ENCODE measurements at regions of chr2 and their contacts with region 1.

Region 1: GRCh38 chr2:120252225-120253021 is at the start of gene RALB:
- DNase-seq: peak; percentile 98
- ATAC-seq: peak; percentile 91
- H3K4me3 ChIP-seq: peak within 1 kb of the TSS; percentile 70 to 87 (median 73)
- H3K27ac ChIP-seq: peak within 1 kb of the TSS; percentile 47
- H3K4me1 ChIP-seq: peaks cover 46% of the 10 kb centered on the region
- H3K27me3 ChIP-seq: peaks cover 8 to 32% of the 10 kb centered on the region in 2 experiments; a peak in 3 of 5 replicates
- CTCF ChIP-seq: no peak
- EP300 ChIP-seq: no peak
- POLR2A ChIP-seq: peak in 1 of 2 experiments; percentile 51; a peak in 3 of 4 replicates
- RAD21 ChIP-seq: no peak
- total RNA-seq, gene RALB: 43.2 and 65.4 TPM in 2 replicates

Region 2: DNA sequence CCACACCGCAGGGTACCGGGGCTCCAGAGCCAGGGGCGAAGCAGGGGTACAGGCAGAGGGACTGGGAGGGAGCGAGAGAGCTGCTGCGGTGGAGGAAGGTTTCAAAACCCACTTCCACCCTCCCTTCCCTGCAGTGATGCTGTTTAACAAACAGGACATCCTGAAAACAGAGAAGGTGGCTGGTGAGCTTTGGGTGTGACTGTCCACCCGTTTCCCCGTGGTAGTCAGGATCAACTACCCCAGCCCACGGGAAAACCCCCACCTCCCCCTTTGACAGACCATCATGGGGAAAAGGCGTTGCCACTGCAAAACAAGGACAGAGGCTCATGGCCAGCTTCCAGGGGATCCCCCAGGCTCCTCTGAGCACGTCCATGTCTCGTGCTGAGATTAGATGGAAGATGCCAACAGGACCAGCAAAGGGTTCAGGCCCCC is 42.1 kb before region 1 on chr2:
- CTCF ChIA-PET with region 1: no interaction called
- POLR2A ChIA-PET with region 1: no interaction called
- in situ Hi-C with region 1: no loop called
- intact Hi-C with region 1: no loop called
- DNase-seq: no peak
- ATAC-seq: no peak
- H3K4me3 ChIP-seq: no peak overlapping the region; a peak in 1 of 6 replicates
- H3K27ac ChIP-seq: no peak overlapping the region
- H3K4me1 ChIP-seq: peaks cover 6% of the 10 kb centered on the region; the same call in 1 of the 2 replicates
- H3K27me3 ChIP-seq: peaks cover 2 to 13% of the 10 kb centered on the region in 2 experiments; a peak in 3 of 5 replicates
- CTCF ChIP-seq: no peak
- EP300 ChIP-seq: no peak
- POLR2A ChIP-seq: no peak
- RAD21 ChIP-seq: no peak

Region 3: GRCh38 chr2:120223034-120223912 is 29.1 kb before region 1 on chr2 and contains the start of gene TMEM185B:
- CTCF ChIA-PET with region 1: no interaction called
- POLR2A ChIA-PET with region 1: interaction called, 11 read pairs
- in situ Hi-C with region 1: no loop called
- intact Hi-C with region 1: no loop called
- DNase-seq: peak; percentile 59
- ATAC-seq: peak; percentile 81
- H3K4me3 ChIP-seq: peak within 1 kb of the TSS; percentile 61 to 81 (median 70)
- H3K27ac ChIP-seq: peak within 1 kb of the TSS; percentile 14
- H3K4me1 ChIP-seq: peaks cover 62% of the 10 kb centered on the region
- H3K27me3 ChIP-seq: peaks cover 14 to 38% of the 10 kb centered on the region in 2 experiments; a peak in 4 of 5 replicates
- CTCF ChIP-seq: peak; percentile 71
- EP300 ChIP-seq: no peak
- POLR2A ChIP-seq: peak; percentile 61 to 69; a peak in 3 of 4 replicates
- RAD21 ChIP-seq: peak; percentile 74
- total RNA-seq, gene TMEM185B: 3.5 and 7.0 TPM in 2 replicates

Region 4: DNA sequence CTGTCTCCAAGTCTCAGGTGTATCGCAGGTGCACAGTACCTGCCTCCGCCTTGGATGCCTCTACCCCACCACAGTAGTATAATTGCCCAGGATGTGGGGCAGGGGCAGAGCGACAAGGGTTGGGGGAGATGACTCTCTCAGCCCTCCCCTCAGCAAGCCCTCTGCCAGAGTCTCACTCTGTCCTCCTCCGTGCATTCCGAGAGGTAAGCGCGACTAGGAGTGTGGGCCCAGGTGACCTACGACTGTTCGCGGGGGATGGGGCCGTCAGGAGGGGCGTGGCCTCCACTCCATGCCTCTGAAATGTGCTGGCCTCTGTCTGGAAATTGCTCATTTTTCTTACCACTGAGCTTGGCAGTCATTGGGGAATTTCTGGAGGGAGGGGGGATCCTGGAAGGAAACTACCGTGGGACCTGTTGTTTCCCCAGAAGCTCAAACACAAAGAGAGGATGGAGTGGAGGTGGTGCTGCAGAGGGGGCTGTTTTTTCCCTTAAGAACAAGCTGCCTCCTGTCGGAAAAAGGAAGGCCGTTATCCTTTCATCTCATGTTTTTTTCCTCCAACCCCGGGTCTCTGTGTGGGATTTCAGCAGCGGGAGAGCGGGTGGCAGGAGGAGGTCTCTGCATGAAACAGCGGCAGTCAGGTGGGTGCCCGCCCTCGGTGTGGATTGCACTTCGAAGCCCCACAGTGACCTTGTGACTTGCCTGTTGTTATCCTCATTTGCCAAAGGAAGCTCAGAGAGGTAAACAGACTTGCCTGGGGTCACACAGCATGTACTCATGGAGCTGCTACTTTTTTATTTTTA is 12.7 kb before region 1 on chr2:
- CTCF ChIA-PET with region 1: no interaction called
- POLR2A ChIA-PET with region 1: interaction called, 22 read pairs
- in situ Hi-C with region 1: no loop called
- intact Hi-C with region 1: no loop called
- DNase-seq: peak; percentile 37
- ATAC-seq: peak; percentile 48
- H3K4me3 ChIP-seq: peak overlapping the region; percentile 29 to 68 (median 48)
- H3K27ac ChIP-seq: peak overlapping the region; percentile 4
- H3K4me1 ChIP-seq: peaks cover 48% of the 10 kb centered on the region
- H3K27me3 ChIP-seq: peaks cover 4 to 10% of the 10 kb centered on the region in 2 experiments; a peak in 4 of 5 replicates
- CTCF ChIP-seq: no peak
- EP300 ChIP-seq: no peak
- POLR2A ChIP-seq: no peak
- RAD21 ChIP-seq: no peak

Region 5: DNA sequence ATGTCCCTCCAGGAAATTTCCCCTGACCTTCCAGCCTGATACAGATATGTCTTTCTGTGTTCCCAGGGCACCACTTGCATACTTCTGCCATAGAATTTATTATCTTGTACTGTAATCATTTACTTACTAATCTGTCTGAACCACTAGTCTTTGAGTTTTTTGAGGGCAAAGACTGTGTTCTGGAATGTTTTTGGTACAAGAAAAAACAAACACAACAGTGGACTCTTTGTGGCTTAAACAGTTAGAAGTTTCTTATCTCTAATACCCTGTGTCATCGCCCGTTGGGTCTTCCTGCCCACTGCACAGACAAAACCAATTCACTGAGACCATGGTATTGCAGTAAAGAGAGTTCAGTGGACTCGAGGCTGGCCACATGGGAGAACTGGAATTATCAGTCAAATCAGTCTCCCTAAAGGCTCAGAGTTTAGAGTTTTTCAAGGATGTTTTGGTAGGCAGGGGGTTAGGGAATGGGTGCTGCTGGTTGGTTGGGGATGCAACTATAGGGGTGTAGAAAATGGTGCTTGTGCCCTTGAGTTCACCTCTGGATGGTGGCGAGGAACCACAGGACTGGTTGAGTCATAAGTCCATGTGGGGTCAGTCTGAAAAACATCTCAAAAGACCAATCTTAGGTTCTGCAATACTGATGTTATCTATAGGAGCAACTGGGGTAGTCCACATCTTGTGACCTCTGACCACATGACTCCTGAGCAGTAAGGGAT is 20.5 kb after region 1 on chr2:
- CTCF ChIA-PET with region 1: no interaction called
- POLR2A ChIA-PET with region 1: interaction called, 7 read pairs
- in situ Hi-C with region 1: no loop called
- intact Hi-C with region 1: loop called (anchors 1 kb)
- DNase-seq: peak; percentile 95
- ATAC-seq: peak; percentile 92
- H3K4me3 ChIP-seq: no peak overlapping the region; a peak in 1 of 6 replicates
- H3K27ac ChIP-seq: peak overlapping the region; percentile 86
- H3K4me1 ChIP-seq: peaks cover 67% of the 10 kb centered on the region
- H3K27me3 ChIP-seq: no peaks in the 10 kb centered on the region
- CTCF ChIP-seq: no peak
- EP300 ChIP-seq: peak in 1 of 2 experiments; percentile 85; a peak in 2 of 4 replicates
- POLR2A ChIP-seq: no peak
- RAD21 ChIP-seq: no peak

Region 6: GRCh38 chr2:120312861-120313694 is 60.7 kb after region 1 on chr2:
- CTCF ChIA-PET with region 1: interaction called, 13 read pairs
- POLR2A ChIA-PET with region 1: interaction called, 4 read pairs
- in situ Hi-C with region 1: no loop called
- intact Hi-C with region 1: loop called (anchors 1 kb)
- DNase-seq: peak; percentile 66
- ATAC-seq: peak; percentile 77
- H3K4me3 ChIP-seq: peak overlapping the region; percentile 55 to 70 (median 63)
- H3K27ac ChIP-seq: no peak overlapping the region
- H3K4me1 ChIP-seq: peaks cover 20% of the 10 kb centered on the region
- H3K27me3 ChIP-seq: peaks cover 22 to 46% of the 10 kb centered on the region in 2 experiments; a peak in 4 of 5 replicates
- CTCF ChIP-seq: peak; percentile 98
- EP300 ChIP-seq: no peak
- POLR2A ChIP-seq: no peak
- RAD21 ChIP-seq: peak; percentile 91

Region 7: DNA sequence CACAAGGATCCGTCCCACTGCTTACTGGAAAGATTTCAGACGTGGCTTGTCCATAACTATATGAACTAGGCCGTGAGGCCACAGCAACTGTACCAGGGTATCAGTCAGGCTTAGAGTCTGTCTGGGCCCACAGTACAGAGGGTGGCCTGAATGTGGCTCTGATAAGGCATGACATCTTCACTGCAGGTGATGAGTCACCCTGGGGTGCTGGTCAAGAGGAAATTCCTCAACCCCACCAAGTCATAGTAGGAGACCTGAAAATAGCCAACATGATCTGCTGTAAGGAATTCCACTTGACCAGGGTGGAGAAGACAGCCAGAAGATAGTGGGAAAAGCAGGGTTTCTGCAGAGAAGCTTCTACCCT is 201.2 kb after region 1 on chr2:
- CTCF ChIA-PET with region 1: no interaction called
- POLR2A ChIA-PET with region 1: no interaction called
- in situ Hi-C with region 1: no loop called
- intact Hi-C with region 1: loop called (anchors 5 kb)
- DNase-seq: peak; percentile 61
- ATAC-seq: peak; percentile 61
- H3K4me3 ChIP-seq: no peak overlapping the region
- H3K27ac ChIP-seq: no peak overlapping the region
- H3K4me1 ChIP-seq: peaks cover 32% of the 10 kb centered on the region
- H3K27me3 ChIP-seq: peaks cover 13 to 39% of the 10 kb centered on the region in 2 experiments; a peak in 4 of 5 replicates
- CTCF ChIP-seq: no peak
- EP300 ChIP-seq: no peak
- POLR2A ChIP-seq: no peak
- RAD21 ChIP-seq: no peak

Region 8: DNA sequence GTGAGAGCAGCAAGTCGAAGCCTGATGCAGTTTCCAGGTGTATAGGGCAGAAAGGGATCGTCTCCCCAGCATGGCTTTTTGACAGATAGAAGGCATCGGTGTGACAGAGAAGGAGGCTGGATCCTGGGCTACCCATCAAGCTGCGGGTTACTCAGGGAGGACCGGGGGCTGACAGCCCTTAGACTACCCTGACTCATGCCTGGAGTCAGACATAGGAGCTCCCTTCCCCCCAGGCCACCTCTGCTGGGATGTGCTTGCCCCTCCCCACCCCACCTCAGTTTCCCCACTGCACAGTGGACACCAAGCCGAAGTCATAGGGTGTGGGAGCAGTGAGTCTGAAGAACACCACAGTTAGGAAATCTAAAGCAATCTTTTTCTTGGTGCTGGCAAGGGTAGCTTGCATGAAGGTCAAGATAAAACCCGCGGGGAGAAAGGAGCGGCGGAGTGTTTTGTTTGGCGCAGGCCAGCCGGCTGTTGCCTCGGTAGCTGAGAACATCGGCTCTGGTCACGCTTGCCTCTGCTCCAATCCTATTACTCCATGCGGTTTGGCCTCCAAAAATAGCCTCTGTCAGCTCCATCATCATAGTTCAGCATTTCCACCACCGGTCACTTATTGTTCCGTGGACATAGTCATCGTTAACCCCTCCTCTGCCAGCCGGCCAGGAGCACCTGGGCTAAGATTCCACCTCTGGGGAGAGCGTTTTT is 314.1 kb after region 1 on chr2:
- CTCF ChIA-PET with region 1: no interaction called
- POLR2A ChIA-PET with region 1: no interaction called
- in situ Hi-C with region 1: no loop called
- intact Hi-C with region 1: loop called (anchors 10 kb)
- DNase-seq: no peak
- ATAC-seq: no peak
- H3K4me3 ChIP-seq: no peak overlapping the region
- H3K27ac ChIP-seq: no peak overlapping the region
- H3K4me1 ChIP-seq: peaks cover 57% of the 10 kb centered on the region
- H3K27me3 ChIP-seq: peaks cover 38 to 88% of the 10 kb centered on the region in 2 experiments
- CTCF ChIP-seq: no peak
- EP300 ChIP-seq: no peak
- POLR2A ChIP-seq: no peak
- RAD21 ChIP-seq: no peak